ENCODE measurements at regions of chr11 and their contacts with region 1.

Region 1: GRCh38 chr11:45899448-45900173 is 7.5 kb downstream of the FREY1 start:
- DNase-seq: peak; percentile 87 to 91
- H3K4me3 ChIP-seq: peak overlapping the region; percentile 67
- H3K4me3 Mint-ChIP-seq: peak overlapping the region; percentile 77
- H3K27ac Mint-ChIP-seq: peak overlapping the region; percentile 84
- H3K4me1 ChIP-seq: peaks cover 10% of the 10 kb centered on the region
- H3K4me1 Mint-ChIP-seq: peaks cover 8% of the 10 kb centered on the region
- H3K27me3 ChIP-seq: no peaks in the 10 kb centered on the region
- H3K27me3 Mint-ChIP-seq: peaks cover 4% of the 10 kb centered on the region
- CTCF ChIP-seq: no peak

Region 2: GRCh38 chr11:45885274-45885920 is 14.2 kb before region 1 on chr11 and contains the start of gene MAPK8IP1:
- CTCF ChIA-PET with region 1: no interaction called
- POLR2A ChIA-PET with region 1: no interaction called
- intact Hi-C with region 1: loop called (anchors 1 kb)
- DNase-seq: peak; percentile 67 to 79
- H3K4me3 ChIP-seq: peak within 1 kb of the TSS; percentile 56
- H3K4me3 Mint-ChIP-seq: peak within 1 kb of the TSS; percentile 63
- H3K27ac Mint-ChIP-seq: peak within 1 kb of the TSS; percentile 43
- H3K4me1 ChIP-seq: peaks cover 4% of the 10 kb centered on the region; the same call in 1 of the 2 replicates
- H3K4me1 Mint-ChIP-seq: no peaks in the 10 kb centered on the region
- H3K27me3 ChIP-seq: no peaks in the 10 kb centered on the region
- H3K27me3 Mint-ChIP-seq: no peaks in the 10 kb centered on the region
- CTCF ChIP-seq: peak in 1 of 2 experiments; percentile 10
- total RNA-seq, gene MAPK8IP1: 8.2 and 8.5 TPM in 2 replicates

Region 3: DNA sequence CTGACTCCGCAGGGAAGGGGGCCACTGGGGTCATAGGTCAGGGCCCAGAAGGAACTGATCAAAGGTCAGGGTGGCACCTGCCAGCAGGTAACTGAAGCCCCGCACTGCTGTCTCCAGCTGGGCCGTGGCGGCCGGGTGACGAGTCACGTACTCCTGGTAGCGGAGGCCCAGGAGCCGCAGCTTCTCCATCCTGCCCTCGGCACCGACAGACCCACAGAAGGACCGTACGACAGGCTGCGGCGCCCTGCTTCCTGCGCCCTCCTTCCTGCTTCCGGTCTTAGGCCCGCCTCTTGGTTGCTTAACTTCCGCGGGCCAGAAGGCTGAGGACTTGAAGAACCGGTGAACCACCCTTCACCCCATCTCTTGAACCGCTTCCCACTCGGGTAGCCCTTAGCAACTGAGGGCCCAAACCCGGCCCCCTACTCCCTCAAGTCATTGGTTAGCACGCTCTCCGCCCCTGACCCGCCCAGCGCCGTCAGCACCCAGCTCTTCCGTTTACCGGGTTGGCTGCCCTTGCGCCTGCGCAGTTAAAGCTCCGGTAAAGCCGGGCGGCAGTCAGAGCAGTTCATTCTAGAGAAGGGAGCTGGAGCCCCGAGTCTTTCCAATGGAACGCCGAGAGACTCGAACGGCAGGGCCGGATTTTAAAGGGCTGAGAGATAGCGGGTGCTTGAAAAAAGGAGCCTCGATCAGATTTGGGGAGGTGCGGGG is 18.2 kb after region 1 on chr11 and contains the start of gene PEX16:
- CTCF ChIA-PET with region 1: interaction called, 4 read pairs
- POLR2A ChIA-PET with region 1: interaction called, 4 read pairs
- intact Hi-C with region 1: loop called (anchors 1 kb)
- DNase-seq: peak; percentile 98 to 99
- H3K4me3 ChIP-seq: peak within 1 kb of the TSS; percentile 92
- H3K4me3 Mint-ChIP-seq: peak within 1 kb of the TSS; percentile 83
- H3K27ac Mint-ChIP-seq: peak within 1 kb of the TSS; percentile 99
- H3K4me1 ChIP-seq: peaks cover 17% of the 10 kb centered on the region
- H3K4me1 Mint-ChIP-seq: peaks cover 6% of the 10 kb centered on the region
- H3K27me3 ChIP-seq: no peaks in the 10 kb centered on the region
- H3K27me3 Mint-ChIP-seq: no peaks in the 10 kb centered on the region
- CTCF ChIP-seq: no peak
- total RNA-seq, gene PEX16: 41.4 and 45.8 TPM in 2 replicates

Region 4: DNA sequence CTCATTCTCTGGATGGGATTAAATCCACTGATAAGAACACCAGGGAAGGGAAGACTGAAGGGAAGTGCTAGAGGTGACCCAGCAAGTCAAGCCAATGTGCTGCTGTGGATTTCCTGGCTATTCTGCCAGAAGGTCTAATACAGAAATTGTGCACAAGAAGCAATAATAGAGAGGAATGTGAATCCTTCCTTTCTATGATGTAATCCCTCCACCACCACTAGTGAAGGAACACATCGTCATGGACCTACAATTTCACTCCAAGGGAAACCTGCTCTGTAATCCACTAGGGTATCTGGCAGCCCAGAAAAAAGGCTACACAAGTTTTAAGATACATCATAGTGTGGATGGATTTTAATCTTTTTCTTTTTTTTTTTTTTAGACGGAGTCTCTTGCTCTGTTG is 40.2 kb after region 1 on chr11:
- CTCF ChIA-PET with region 1: no interaction called
- POLR2A ChIA-PET with region 1: no interaction called
- intact Hi-C with region 1: no loop called
- DNase-seq: no peak
- H3K4me3 ChIP-seq: no peak overlapping the region
- H3K4me3 Mint-ChIP-seq: no peak overlapping the region
- H3K27ac Mint-ChIP-seq: no peak overlapping the region
- H3K4me1 ChIP-seq: no peaks in the 10 kb centered on the region
- H3K4me1 Mint-ChIP-seq: no peaks in the 10 kb centered on the region
- H3K27me3 ChIP-seq: no peaks in the 10 kb centered on the region
- H3K27me3 Mint-ChIP-seq: no peaks in the 10 kb centered on the region
- CTCF ChIP-seq: no peak